Activated CD8-positive, alpha-beta T cell treated with anti-CD3 and anti-CD28 coated beads, Interleukin-2, amount 10 ng/mL, durations not matched to agents 7 days and 5 days (primary cell): ENCODE measurements at regions of chr15 and their contacts with region 1.

Region 1: DNA sequence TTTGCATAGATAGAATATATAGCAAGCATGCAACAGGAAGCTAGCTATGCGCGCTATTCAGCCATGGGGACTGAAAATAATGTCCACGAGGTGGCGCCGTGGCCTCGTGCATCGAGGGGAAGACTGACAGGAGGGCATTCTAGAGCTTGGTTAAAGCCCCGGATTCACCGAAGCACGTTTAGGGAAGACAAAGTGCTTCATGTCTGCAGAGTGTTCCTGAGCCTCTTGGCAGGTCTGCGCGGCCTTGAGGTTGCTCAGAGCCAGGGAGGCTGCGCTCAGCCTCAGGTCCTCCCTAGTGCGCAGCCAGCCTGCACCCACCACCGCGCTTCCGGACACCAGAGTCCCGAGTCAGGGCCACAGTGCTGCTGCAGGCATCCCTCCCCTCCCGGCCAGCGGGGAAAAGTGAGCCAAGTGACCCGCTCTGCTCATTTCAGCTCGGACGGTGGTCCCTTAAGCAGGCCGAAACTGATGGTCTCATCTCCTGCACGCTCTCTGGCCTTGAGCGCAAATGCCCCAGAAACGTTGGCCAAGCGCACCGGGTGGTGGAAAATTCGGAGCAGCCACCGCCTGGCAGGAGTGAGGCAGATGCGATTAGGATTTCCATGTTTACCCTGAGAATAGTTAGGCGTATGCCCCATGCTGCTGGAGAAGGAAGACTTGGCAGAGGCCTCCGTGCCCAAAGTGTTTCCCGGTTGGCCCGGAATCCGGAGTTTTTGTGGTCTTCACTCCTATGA is 24.8 kb downstream of the GABRA5 start:
- DNase-seq: peak; percentile 63
- ATAC-seq: peak; percentile 44
- H3K4me3 Mint-ChIP-seq: no peak overlapping the region
- H3K27ac Mint-ChIP-seq: no peak overlapping the region
- H3K4me1 Mint-ChIP-seq: peaks cover 3% of the 10 kb centered on the region
- H3K27me3 Mint-ChIP-seq: no peaks in the 10 kb centered on the region

Region 2: GRCh38 chr15:26879706-26880105 is 11.9 kb before region 1 on chr15:
- CTCF ChIA-PET with region 1: interaction called, 13 read pairs
- POLR2A ChIA-PET with region 1: no interaction called
- DNase-seq: no peak
- ATAC-seq: no peak
- H3K4me3 Mint-ChIP-seq: no peak overlapping the region
- H3K27ac Mint-ChIP-seq: no peak overlapping the region
- H3K4me1 Mint-ChIP-seq: no peaks in the 10 kb centered on the region
- H3K27me3 Mint-ChIP-seq: no peaks in the 10 kb centered on the region

Region 3: DNA sequence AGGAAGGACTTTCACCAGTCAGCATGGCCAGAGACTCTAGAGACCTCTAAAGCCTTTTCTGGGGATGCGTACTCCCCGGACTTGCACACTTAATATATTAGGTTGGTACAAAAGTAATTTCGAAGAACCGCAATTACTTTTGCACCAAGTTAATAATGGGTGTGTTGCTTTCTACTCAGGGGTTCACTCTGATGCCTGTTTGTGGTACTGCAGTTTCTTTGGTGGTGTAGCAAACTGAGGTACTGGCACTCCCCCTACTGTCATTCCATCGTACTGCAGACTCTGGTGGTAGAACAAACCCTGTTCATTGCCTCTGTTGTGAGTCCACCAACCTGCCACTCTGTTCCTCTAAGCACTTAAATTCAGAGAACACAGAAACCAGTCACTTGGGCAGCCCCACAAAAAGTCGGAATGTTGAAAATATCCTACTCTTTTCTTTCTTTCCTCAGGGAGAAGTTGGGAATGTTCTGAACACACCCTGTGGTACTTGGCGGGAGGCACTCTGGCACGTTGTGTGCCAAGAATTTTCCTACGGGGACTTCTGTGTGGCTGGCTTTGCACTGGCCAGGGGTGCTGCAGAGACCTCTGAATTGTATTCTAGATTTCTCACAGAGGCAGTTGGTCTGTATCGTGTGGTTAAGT is 125.7 kb after region 1 on chr15:
- CTCF ChIA-PET with region 1: interaction called, 10 read pairs
- POLR2A ChIA-PET with region 1: no interaction called
- DNase-seq: peak; percentile 60
- ATAC-seq: no peak
- H3K4me3 Mint-ChIP-seq: no peak overlapping the region
- H3K27ac Mint-ChIP-seq: no peak overlapping the region
- H3K4me1 Mint-ChIP-seq: no peaks in the 10 kb centered on the region
- H3K27me3 Mint-ChIP-seq: no peaks in the 10 kb centered on the region